ENCODE measurements at regions of chr22 and their contacts with region 1.

Region 1: GRCh38 chr22:25465949-25466348 is 98.5 kb upstream of the GRK3 start:
- DNase-seq: no peak
- H3K4me3 Mint-ChIP-seq: no peak overlapping the region
- H3K27ac Mint-ChIP-seq: no peak overlapping the region
- H3K4me1 Mint-ChIP-seq: no peaks in the 10 kb centered on the region
- H3K27me3 Mint-ChIP-seq: no peaks in the 10 kb centered on the region
- CTCF ChIP-seq: no peak

Region 2: GRCh38 chr22:25212337-25212736 is 253.6 kb before region 1 on chr22:
- CTCF ChIA-PET with region 1: no interaction called
- intact Hi-C with region 1: no loop called
- DNase-seq: no peak
- H3K4me3 Mint-ChIP-seq: no peak overlapping the region
- H3K27ac Mint-ChIP-seq: no peak overlapping the region
- H3K4me1 Mint-ChIP-seq: no peaks in the 10 kb centered on the region
- H3K27me3 Mint-ChIP-seq: no peaks in the 10 kb centered on the region
- CTCF ChIP-seq: no peak

Region 3: GRCh38 chr22:25395915-25396314 is 70.0 kb before region 1 on chr22:
- CTCF ChIA-PET with region 1: no interaction called
- intact Hi-C with region 1: no loop called
- DNase-seq: no peak
- H3K4me3 Mint-ChIP-seq: no peak overlapping the region
- H3K27ac Mint-ChIP-seq: no peak overlapping the region
- H3K4me1 Mint-ChIP-seq: peaks cover 29% of the 10 kb centered on the region
- H3K27me3 Mint-ChIP-seq: no peaks in the 10 kb centered on the region
- CTCF ChIP-seq: no peak

Region 4: GRCh38 chr22:25540166-25540907 is 74.4 kb after region 1 on chr22:
- CTCF ChIA-PET with region 1: no interaction called
- intact Hi-C with region 1: loop called (anchors 5 kb)
- DNase-seq: no peak
- H3K4me3 Mint-ChIP-seq: no peak overlapping the region
- H3K27ac Mint-ChIP-seq: no peak overlapping the region
- H3K4me1 Mint-ChIP-seq: peaks cover 11% of the 10 kb centered on the region
- H3K27me3 Mint-ChIP-seq: no peaks in the 10 kb centered on the region
- CTCF ChIP-seq: no peak

Region 5: GRCh38 chr22:25702040-25702439 is 236.1 kb after region 1 on chr22:
- CTCF ChIA-PET with region 1: interaction called, 6 read pairs
- intact Hi-C with region 1: loop called (anchors 1 kb)
- DNase-seq: no peak
- H3K4me3 Mint-ChIP-seq: no peak overlapping the region
- H3K27ac Mint-ChIP-seq: no peak overlapping the region
- H3K4me1 Mint-ChIP-seq: no peaks in the 10 kb centered on the region
- H3K27me3 Mint-ChIP-seq: no peaks in the 10 kb centered on the region
- CTCF ChIP-seq: no peak

Region 6: GRCh38 chr22:25772288-25772687 is 306.3 kb after region 1 on chr22:
- CTCF ChIA-PET with region 1: interaction called, 13 read pairs
- intact Hi-C with region 1: loop called (anchors 1 kb)
- DNase-seq: no peak
- H3K4me3 Mint-ChIP-seq: no peak overlapping the region
- H3K27ac Mint-ChIP-seq: no peak overlapping the region
- H3K4me1 Mint-ChIP-seq: no peaks in the 10 kb centered on the region
- H3K27me3 Mint-ChIP-seq: peaks cover 61% of the 10 kb centered on the region
- CTCF ChIP-seq: no peak